Activated CD4-positive, alpha-beta memory T cell treated with anti-CD3 and anti-CD28 coated beads for 36 hours (primary cell): ENCODE measurements at regions of chr9 and their contacts with region 1.

Region 1: GRCh38 chr9:127388037-127388855 is 8.7 kb upstream of the SLC2A8 start:
- DNase-seq: peak; percentile 94
- H3K4me3 Mint-ChIP-seq: peak overlapping the region; percentile 38
- H3K27ac Mint-ChIP-seq: peak overlapping the region; percentile 70
- H3K4me1 Mint-ChIP-seq: peaks cover 30% of the 10 kb centered on the region
- H3K27me3 Mint-ChIP-seq: peaks cover 62% of the 10 kb centered on the region

Region 2: DNA sequence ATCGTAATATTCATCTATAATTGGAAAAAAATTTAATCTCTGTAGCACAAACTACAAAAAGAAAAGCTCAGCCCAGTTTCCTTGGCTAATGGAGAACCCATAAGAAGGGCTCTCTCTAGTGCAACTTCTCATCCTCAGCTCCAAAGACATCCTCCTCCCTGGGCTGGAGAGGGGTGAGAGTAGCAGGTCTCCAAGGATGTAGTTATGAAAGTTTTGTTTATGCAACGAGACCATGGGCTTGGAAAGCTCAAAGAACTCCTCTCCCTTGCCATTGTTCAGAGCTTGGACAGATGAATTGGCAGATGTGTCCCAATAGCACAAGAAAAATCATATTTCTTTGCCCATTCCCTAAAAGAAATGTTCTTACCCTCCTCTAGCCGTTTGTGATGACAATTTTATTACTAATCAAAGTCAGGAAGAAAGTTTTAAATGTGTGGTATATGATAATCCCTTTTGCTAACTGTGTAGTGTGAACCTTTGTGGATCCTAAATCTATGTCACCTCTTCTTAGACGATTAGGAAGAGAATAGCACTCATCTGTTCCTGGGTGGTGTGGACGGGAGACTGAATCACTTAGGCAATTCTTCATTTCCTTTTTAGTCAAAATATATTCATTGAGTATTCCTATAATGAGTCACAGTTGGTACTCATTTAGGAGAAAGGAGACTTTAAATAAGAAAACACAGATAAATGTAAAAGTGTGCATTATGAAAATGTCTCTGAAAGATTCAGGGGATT is 71.5 kb before region 1 on chr9:
- CTCF ChIA-PET with region 1: no interaction called
- POLR2A ChIA-PET with region 1: no interaction called
- intact Hi-C with region 1: loop called (anchors 1 kb)
- DNase-seq: peak; percentile 41
- H3K4me3 Mint-ChIP-seq: no peak overlapping the region
- H3K27ac Mint-ChIP-seq: no peak overlapping the region
- H3K4me1 Mint-ChIP-seq: peaks cover 11% of the 10 kb centered on the region
- H3K27me3 Mint-ChIP-seq: peaks cover 5% of the 10 kb centered on the region